Activated CD4-positive, alpha-beta memory T cell treated with anti-CD3 and anti-CD28 coated beads, Interleukin-2, amount 10 ng/mL, durations not matched to agents 7 days and 5 days (primary cell): ENCODE measurements at regions of chr2 and their contacts with region 1.

Region 1: GRCh38 chr2:230712443-230713330 is at the start of gene CAB39:
- DNase-seq: peak; percentile 90
- H3K4me3 Mint-ChIP-seq: peak within 1 kb of the TSS; percentile 99
- H3K27ac Mint-ChIP-seq: peak within 1 kb of the TSS; percentile 97
- H3K4me1 Mint-ChIP-seq: peaks cover 42% of the 10 kb centered on the region
- H3K27me3 Mint-ChIP-seq: no peaks in the 10 kb centered on the region
- total RNA-seq, gene CAB39: 156 to 161 TPM

Region 2: GRCh38 chr2:230400454-230400853 is 312.2 kb before region 1 on chr2:
- CTCF ChIA-PET with region 1: no interaction called
- POLR2A ChIA-PET with region 1: no interaction called
- DNase-seq: no peak
- H3K4me3 Mint-ChIP-seq: no peak overlapping the region
- H3K27ac Mint-ChIP-seq: no peak overlapping the region
- H3K4me1 Mint-ChIP-seq: no peaks in the 10 kb centered on the region
- H3K27me3 Mint-ChIP-seq: no peaks in the 10 kb centered on the region

Region 3: GRCh38 chr2:230411570-230412370 is 300.9 kb before region 1 on chr2:
- CTCF ChIA-PET with region 1: no interaction called
- POLR2A ChIA-PET with region 1: interaction called, 19 read pairs
- DNase-seq: peak; percentile 76
- H3K4me3 Mint-ChIP-seq: peak overlapping the region; percentile 98
- H3K27ac Mint-ChIP-seq: peak overlapping the region; percentile 100
- H3K4me1 Mint-ChIP-seq: peaks cover 61% of the 10 kb centered on the region
- H3K27me3 Mint-ChIP-seq: no peaks in the 10 kb centered on the region

Region 4: DNA sequence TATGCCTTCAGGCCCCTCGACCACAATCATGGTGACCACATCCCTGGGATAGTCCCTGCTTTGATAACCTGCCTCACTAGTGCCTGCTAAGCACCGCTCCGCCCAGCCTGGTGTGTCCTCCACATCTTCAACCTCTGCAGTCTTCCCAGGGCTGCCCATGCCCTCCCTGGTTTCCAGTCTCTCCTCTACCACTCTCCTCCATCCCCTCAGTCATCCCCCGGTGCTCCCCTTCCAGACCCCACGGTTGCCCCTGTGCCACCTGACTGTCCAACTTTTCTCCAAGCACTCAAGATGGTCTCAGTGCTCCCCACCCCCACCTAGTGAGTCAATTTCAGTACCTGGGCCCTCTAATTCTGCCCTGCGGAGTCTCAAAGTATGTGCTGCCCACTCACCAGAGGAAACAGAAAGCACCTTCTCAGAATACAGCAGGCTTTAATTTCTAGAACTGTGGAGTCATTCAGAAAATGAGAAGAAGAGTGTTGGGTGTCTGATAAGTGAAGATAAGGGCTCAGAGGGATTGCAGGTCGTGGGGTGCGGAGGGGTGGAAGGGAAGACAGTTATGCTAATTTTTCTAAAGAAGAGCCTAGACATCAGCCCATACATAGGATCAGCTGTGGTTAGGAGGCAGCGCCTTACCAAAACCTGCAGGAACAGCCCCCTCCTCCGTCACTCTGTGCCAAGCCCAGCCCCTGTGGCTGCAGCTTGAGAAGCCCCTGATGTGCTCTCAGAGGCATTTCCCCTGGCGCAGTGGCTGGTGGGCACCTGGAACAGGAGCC is 53.6 kb before region 1 on chr2:
- CTCF ChIA-PET with region 1: interaction called, 44 read pairs
- POLR2A ChIA-PET with region 1: interaction called, 146 read pairs
- DNase-seq: peak; percentile 85
- H3K4me3 Mint-ChIP-seq: peak overlapping the region; percentile 85
- H3K27ac Mint-ChIP-seq: peak overlapping the region; percentile 99
- H3K4me1 Mint-ChIP-seq: peaks cover 94% of the 10 kb centered on the region
- H3K27me3 Mint-ChIP-seq: no peaks in the 10 kb centered on the region

Region 5: GRCh38 chr2:230731512-230731911 is 18.8 kb after region 1 on chr2:
- CTCF ChIA-PET with region 1: interaction called, 3 read pairs
- POLR2A ChIA-PET with region 1: interaction called, 16 read pairs
- DNase-seq: no peak
- H3K4me3 Mint-ChIP-seq: no peak overlapping the region
- H3K27ac Mint-ChIP-seq: no peak overlapping the region
- H3K4me1 Mint-ChIP-seq: peaks cover 61% of the 10 kb centered on the region
- H3K27me3 Mint-ChIP-seq: no peaks in the 10 kb centered on the region

Region 6: DNA sequence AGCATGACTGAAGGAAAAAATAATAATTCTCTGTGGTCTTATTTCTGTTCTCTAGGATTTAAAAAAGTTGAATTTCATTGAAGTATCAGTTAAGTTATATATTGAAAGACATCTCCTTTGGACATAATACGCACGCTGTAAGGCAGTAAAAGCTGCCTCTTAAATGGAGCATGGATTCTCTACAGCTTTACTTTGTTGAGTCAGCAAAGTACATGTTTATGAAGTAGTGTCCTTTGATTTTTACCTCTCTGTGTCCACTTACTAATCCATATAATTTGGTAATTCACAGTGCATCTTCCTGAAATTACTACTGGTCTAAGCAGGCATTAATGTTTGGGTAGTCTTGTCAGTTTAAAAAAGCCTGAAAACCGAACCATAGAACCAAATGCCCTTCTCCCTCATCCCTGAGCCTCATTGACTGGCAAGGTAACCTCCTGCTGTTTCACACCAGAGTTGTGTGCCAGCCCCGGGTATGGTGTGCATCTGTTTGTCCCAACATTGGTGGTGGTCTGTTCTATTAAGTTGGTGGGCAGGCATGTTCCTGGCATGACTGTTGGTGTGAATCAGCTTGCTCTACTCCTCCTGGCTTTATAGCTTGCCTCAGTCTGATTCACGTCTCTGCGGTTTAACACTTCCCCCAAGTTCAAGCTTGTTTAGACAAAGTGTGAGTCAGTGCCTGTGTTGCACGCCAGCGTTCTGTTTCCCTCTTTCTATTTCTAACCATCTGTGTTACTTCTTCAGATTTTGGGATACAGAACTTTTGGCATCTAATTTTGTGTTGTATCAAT is 81.1 kb after region 1 on chr2:
- CTCF ChIA-PET with region 1: interaction called, 59 read pairs
- POLR2A ChIA-PET with region 1: interaction called, 46 read pairs
- DNase-seq: peak; percentile 83
- H3K4me3 Mint-ChIP-seq: peak overlapping the region; percentile 71
- H3K27ac Mint-ChIP-seq: peak overlapping the region; percentile 96
- H3K4me1 Mint-ChIP-seq: peaks cover 54% of the 10 kb centered on the region
- H3K27me3 Mint-ChIP-seq: no peaks in the 10 kb centered on the region